Endothelial cell of umbilical vein (primary cell): ENCODE measurements at regions of chr11 and their contacts with region 1.

Region 1: DNA sequence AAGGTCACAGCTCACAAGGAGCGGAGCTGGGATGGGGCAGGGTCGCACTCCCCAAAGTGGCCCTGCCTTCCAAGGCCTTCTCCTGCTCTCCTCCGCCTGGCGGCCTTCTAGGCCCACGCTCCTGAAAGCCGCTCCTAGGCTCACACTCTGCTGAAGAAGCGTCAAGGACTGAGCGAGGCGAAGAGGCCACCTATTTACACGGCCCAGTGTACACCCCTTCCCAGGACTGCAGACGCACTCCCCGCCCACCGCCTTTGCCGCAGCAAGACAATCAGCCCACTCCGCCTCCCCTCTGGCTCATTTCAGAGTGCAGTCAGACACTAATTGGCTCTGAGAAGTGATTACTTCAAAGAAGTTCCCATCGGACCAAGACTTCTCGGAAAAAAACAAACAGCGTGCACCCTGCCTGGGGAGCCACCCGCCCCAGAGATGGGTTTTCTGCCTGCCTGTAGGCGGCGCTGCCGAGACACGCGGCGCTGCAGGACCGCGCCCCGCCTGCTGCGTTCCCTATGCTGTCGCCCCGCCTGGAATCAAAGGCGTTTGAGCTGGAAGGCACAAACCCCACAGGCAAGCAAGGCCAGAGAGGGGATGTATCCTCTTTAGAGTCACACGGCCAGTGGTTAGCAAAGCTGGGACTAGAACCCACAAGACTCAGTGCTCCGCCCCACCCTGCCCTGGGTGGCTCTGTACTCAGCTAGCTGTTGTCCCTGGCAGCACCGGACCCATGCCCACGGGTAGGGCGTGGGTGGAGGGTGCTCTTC is 414.8 kb downstream of the BUD13 start:
- DNase-seq: peak; percentile 43
- H3K4me3 ChIP-seq: no peak overlapping the region
- H3K27ac ChIP-seq: peak overlapping the region; percentile 39
- H3K4me1 ChIP-seq: peaks cover 25% of the 10 kb centered on the region
- H3K27me3 ChIP-seq: no peaks in the 10 kb centered on the region
- CTCF ChIP-seq: peak; percentile 87 to 91
- POLR2A ChIP-seq: no peak

Region 2: GRCh38 chr11:116397602-116398084 is 39.7 kb after region 1 on chr11:
- CTCF ChIA-PET with region 1: interaction called, 16 read pairs
- POLR2A ChIA-PET with region 1: no interaction called
- dilution Hi-C with region 1: no loop called
- intact Hi-C with region 1: loop called (anchors 1 kb)
- DNase-seq: no peak
- H3K4me3 ChIP-seq: no peak overlapping the region
- H3K27ac ChIP-seq: peak overlapping the region; percentile 84
- H3K4me1 ChIP-seq: peaks cover 18% of the 10 kb centered on the region
- H3K27me3 ChIP-seq: no peaks in the 10 kb centered on the region
- CTCF ChIP-seq: no peak
- POLR2A ChIP-seq: no peak

Region 3: DNA sequence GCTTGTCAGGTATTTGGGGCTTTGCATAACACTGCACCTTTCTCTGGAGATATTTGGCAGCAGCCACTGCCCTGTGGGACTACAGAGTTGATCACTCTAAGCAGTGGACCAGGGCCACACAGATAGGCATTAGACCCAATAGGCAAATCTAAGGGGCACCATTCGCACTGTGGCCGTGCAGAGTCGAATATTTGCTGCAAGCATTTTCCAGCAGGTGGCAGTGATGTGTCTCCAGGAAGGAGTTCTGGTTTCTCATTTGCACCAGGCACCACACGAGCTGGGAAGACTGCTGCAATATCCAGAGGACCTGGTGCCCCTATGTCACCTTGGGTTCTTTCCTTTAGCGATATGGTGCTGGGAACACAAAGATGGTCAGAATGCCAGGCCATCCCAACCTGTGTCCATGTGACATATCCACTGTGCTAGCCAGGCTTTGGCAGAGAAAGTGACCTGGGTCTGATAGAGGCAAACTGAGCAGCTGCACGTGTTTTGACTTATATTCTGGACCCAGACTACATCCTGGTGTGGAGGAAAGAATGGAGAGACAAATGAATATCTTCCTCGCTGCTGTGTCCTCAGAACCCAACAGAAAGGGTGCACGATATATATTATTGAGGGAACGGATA is 96.2 kb after region 1 on chr11:
- CTCF ChIA-PET with region 1: interaction called, 16 read pairs
- POLR2A ChIA-PET with region 1: no interaction called
- dilution Hi-C with region 1: no loop called
- intact Hi-C with region 1: loop called (anchors 1 kb)
- DNase-seq: peak; percentile 65
- H3K4me3 ChIP-seq: no peak overlapping the region
- H3K27ac ChIP-seq: no peak overlapping the region
- H3K4me1 ChIP-seq: no peaks in the 10 kb centered on the region
- H3K27me3 ChIP-seq: no peaks in the 10 kb centered on the region
- CTCF ChIP-seq: peak; percentile 53 to 80
- POLR2A ChIP-seq: no peak

Region 4: DNA sequence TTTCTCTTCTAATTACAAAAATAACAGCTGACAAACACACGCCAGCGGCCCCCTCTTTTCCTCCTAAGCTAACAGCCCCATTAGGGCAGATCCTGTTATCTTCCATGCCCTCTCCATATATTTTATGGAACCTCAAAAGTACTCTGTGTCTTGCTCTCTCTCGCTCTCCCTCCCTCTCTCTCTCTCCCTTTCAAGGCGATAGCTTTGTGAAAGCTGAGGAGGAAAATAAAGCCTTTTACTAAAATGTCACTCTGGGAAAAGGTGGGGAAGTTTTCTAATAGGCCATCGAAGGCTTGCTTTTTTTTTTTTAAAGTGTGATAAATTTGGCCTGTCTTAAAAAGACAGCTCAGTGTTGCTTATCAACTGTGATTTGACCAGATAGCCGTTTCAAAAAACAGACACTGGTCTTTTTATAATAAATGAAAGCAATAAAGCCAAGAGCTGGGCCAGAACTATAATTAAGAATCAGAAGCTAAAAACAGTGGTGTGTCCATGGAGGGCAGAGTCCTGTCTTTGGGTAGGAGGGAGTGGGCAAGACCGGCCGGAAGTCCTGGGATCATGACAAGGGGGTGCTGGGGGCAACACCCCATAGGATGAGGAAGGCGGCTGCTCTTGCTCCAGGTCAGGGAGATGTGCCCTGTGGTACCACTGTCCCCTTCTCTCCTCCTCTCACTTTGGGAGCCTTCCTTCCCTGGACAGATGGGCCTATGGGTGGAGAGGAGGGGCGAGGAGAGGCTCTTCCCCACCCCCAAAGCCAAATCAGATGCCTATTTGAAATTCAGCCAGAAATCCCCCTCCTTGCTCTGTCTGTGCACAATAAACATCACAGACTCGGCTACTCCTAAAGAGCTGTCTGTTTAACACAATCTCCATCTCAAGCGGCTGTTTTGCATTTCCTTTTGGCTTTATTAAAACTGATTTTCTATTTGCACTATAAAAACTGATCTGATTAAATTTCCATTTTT is 147.6 kb after region 1 on chr11:
- CTCF ChIA-PET with region 1: interaction called, 17 read pairs
- POLR2A ChIA-PET with region 1: no interaction called
- dilution Hi-C with region 1: no loop called
- intact Hi-C with region 1: no loop called
- DNase-seq: no peak
- H3K4me3 ChIP-seq: no peak overlapping the region
- H3K27ac ChIP-seq: no peak overlapping the region
- H3K4me1 ChIP-seq: no peaks in the 10 kb centered on the region
- H3K27me3 ChIP-seq: peaks cover 8 to 18% of the 10 kb centered on the region in 2 experiments
- CTCF ChIP-seq: no peak
- POLR2A ChIP-seq: no peak

Region 5: DNA sequence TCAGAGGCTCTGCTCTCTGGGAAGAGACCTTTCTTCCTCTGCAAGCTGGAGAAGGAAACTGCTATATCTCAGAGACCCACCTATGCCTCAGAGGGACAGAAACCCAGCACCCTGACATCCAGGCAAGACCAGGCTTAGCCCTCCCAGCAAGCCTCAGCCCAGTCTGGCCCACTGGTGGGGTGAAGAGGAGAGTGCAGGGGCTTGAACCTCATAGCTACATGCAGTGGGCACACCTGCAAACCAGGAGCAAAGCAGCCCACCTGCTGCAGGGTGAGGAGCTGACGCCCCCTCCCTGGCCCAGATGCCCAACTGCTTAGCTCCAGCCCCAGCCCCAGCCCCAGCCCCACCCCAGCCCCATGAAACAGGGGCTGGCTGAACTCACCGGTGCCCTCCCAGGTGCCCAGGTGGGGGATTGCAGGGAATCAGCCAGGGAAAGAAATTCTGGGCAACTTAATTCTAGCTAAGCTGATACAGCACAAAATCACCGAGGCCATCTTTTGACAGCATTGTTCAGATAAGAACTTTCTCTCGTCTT is 168.1 kb after region 1 on chr11:
- CTCF ChIA-PET with region 1: no interaction called
- POLR2A ChIA-PET with region 1: no interaction called
- dilution Hi-C with region 1: no loop called
- intact Hi-C with region 1: no loop called
- DNase-seq: no peak
- H3K4me3 ChIP-seq: no peak overlapping the region
- H3K27ac ChIP-seq: no peak overlapping the region
- H3K4me1 ChIP-seq: no peaks in the 10 kb centered on the region
- H3K27me3 ChIP-seq: peaks cover 2 to 10% of the 10 kb centered on the region in 2 experiments
- CTCF ChIP-seq: no peak
- POLR2A ChIP-seq: no peak

Region 6: DNA sequence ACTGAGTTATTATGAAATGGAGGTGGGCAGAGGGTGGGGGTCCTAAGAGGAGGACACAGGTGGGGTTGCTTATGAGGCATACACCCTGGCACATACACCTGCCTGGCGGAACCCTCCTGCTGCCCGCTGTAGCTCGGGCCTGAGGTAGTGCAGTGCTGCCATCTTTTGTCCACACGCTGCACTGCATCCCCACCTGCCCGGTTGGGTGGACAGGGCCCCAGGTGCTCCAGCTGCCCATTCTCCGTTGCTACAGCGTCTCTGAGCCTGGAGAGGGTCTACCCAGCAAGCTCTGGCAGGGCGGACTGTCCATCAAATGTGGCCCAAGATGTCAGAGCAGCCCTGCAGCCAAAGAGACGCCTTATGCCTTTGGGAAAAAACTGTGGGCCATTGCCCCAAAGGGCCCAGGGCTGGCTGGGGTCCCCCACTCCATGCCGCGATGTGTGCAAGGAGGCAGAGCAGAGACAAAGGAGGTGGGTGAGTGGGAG is 283.6 kb after region 1 on chr11:
- CTCF ChIA-PET with region 1: interaction called, 5 read pairs
- POLR2A ChIA-PET with region 1: no interaction called
- dilution Hi-C with region 1: no loop called
- intact Hi-C with region 1: loop called (anchors 2 kb)
- DNase-seq: peak; percentile 29
- H3K4me3 ChIP-seq: no peak overlapping the region
- H3K27ac ChIP-seq: no peak overlapping the region
- H3K4me1 ChIP-seq: no peaks in the 10 kb centered on the region
- H3K27me3 ChIP-seq: no peaks in the 10 kb centered on the region
- CTCF ChIP-seq: peak; percentile 73 to 86
- POLR2A ChIP-seq: no peak